ENCODE measurements at regions of chr15 and their contacts with region 1.

Region 1: DNA sequence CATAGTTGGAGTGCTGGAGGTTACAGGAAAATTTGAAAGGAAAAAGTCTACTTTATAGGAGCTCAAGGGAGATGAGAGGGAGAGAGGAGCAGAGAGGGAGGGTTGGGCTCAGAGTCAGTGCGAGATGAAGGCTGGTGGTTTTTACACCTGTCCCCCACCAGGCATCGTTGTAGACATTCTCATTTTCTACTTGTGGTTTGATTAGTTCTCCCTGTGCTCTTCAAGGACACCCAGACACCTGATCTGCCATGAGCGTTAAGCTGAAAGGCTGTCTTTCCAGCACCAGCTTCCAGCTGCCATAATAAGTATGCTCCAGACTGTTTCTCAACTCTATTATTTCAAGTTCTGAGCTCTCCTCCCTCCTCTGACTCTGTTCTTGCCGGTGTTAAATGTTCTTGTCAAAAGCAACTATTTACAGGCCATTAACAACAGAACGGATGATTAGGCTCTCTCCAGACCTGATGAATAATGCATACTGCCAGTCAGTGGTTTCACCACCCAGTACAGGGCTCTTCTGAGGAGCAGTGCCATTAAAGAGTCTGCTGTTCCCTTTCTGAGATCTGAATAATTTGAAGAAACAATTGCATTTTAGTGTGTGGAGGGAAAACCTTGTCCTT is 514.6 kb upstream of the MCTP2 start:
- DNase-seq: no peak
- H3K4me3 ChIP-seq: no peak overlapping the region
- H3K27ac ChIP-seq: no peak overlapping the region
- H3K4me1 ChIP-seq: peaks cover 8% of the 10 kb centered on the region
- H3K27me3 ChIP-seq: no peaks in the 10 kb centered on the region
- CTCF ChIP-seq: no peak

Region 2: DNA sequence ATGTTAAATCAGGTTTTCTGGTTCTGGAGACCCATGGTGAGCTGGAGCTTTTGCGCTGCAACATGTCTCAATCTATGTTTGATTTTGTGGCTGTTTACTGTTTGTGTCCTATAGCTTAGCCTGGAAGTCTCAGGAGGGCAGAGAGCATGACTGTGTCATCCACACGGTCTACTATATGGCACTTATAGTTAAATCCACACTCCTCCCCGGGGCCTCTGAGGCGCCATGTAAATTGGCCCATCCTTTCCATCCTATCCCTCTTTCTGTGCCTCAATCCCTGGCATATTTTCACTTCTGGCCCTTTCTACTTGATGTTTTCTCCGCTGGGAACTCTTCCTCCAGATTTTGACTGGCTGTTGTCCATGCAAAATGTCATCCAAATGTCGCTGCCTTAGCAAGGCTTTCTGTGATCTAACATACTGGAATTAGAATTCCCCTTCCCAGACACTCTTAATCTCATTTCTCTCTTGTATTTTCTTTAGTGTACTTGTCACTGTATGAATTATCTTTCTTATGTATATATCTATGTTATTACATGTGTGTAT is 67.0 kb before region 1 on chr15:
- CTCF ChIA-PET with region 1: no interaction called
- dilution Hi-C with region 1: loop called (anchors 5 kb)
- in situ Hi-C with region 1: no loop called
- intact Hi-C with region 1: no loop called
- DNase-seq: no peak
- H3K4me3 ChIP-seq: no peak overlapping the region
- H3K27ac ChIP-seq: no peak overlapping the region
- H3K4me1 ChIP-seq: no peaks in the 10 kb centered on the region
- H3K27me3 ChIP-seq: no peaks in the 10 kb centered on the region
- CTCF ChIP-seq: no peak

Region 3: DNA sequence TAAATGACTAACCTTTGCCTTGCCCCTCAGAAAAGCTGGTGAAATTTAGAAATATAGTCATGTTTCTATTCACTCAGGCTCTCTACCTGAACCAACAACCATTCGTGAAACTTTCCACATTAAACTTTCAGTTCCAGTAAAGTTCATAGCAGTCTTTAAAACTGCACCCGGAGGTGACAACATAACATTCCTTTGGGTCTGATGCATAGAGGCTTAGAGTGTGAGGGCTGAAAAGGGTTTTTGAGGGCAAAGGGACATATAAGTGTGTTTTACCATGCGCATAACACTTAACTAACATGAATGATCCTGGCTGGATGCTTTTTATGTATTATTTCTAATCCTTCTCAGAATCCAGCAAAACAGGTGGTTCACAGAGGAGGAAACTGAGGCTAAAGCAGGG is 42.9 kb after region 1 on chr15:
- CTCF ChIA-PET with region 1: no interaction called
- dilution Hi-C with region 1: loop called (anchors 5 kb)
- in situ Hi-C with region 1: no loop called
- intact Hi-C with region 1: no loop called
- DNase-seq: peak; percentile 11
- H3K4me3 ChIP-seq: no peak overlapping the region
- H3K27ac ChIP-seq: no peak overlapping the region
- H3K4me1 ChIP-seq: no peaks in the 10 kb centered on the region
- H3K27me3 ChIP-seq: no peaks in the 10 kb centered on the region
- CTCF ChIP-seq: no peak

Region 4: DNA sequence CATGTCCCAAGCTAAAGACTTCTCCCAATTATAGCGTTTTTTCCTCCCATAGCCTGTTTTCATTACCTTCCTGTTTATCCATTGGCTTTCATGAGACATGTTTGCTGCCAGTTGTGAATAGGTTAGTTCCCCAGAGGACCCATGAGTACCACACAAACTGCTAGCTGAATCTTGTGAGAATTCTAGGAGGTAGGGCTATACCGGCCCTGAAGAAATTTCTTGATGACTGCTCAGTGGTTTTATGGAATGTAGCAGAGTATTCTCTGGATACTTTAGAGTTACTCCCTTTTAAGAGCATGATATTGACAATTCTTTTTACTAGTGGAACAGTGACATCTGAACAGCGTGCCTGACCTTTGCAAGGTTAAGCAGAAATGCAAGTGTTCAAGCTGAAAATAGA is 725.0 kb after region 1 on chr15:
- CTCF ChIA-PET with region 1: no interaction called
- dilution Hi-C with region 1: no loop called
- in situ Hi-C with region 1: no loop called
- intact Hi-C with region 1: no loop called
- DNase-seq: no peak
- H3K4me3 ChIP-seq: no peak overlapping the region
- H3K27ac ChIP-seq: no peak overlapping the region
- H3K4me1 ChIP-seq: peaks cover 6% of the 10 kb centered on the region
- H3K27me3 ChIP-seq: no peaks in the 10 kb centered on the region
- CTCF ChIP-seq: no peak

Measured in mammary epithelial cell (primary cell).